Activated CD4-positive, alpha-beta T cell treated with anti-CD3 and anti-CD28 coated beads, Interleukin-2, amount 10 ng/mL, durations not matched to agents 24 days and 14 days (primary cell): ENCODE measurements at regions of chr7 and their contacts with region 1.

Region 1: GRCh38 chr7:30062591-30062990 is 34.4 kb downstream of the PLEKHA8 start:
- DNase-seq: no peak
- H3K4me3 Mint-ChIP-seq: no peak overlapping the region
- H3K27ac Mint-ChIP-seq: no peak overlapping the region
- H3K4me1 Mint-ChIP-seq: no peaks in the 10 kb centered on the region
- H3K27me3 Mint-ChIP-seq: no peaks in the 10 kb centered on the region

Region 2: DNA sequence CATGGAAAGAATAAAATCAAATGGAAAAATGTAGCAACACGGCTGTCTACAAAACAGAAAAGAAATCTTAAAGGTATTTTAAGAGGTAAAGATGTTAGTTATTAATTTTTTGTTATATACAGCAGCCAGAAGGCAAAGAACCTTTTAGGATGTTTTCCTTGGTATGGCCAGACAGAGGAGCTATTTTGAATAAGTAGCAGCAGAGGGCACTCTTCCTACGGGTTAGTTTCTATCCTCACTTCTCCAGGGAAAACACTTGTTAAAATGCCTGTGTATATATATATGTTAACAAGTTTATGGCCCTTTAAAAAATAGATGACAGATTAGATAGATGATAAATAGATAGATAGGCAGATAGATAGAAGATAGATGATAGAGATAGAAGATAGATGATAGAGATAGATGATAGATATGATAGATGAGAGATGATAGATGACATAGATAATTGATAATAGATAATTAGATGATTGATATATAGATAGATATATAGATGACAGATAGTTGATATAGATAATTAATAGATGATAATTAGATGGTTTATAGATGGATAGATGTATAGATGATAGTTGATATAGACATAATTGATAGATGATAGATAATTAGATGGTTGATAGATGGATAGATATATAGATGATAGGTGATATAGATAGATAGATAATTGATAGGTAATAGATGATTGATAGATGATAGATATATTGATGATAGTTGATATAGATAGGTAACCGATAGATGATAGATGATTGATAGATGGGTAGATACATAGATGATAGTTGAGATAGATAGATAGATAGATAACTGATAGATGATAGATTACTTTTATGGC is 314.1 kb before region 1 on chr7:
- intact Hi-C with region 1: loop called (anchors 2 kb)
- DNase-seq: no peak
- H3K4me3 Mint-ChIP-seq: no peak overlapping the region
- H3K27ac Mint-ChIP-seq: no peak overlapping the region
- H3K4me1 Mint-ChIP-seq: no peaks in the 10 kb centered on the region
- H3K27me3 Mint-ChIP-seq: no peaks in the 10 kb centered on the region

Region 3: GRCh38 chr7:29884399-29885272 is 178.0 kb before region 1 on chr7:
- intact Hi-C with region 1: loop called (anchors 5 kb)
- DNase-seq: no peak
- H3K4me3 Mint-ChIP-seq: no peak overlapping the region
- H3K27ac Mint-ChIP-seq: no peak overlapping the region
- H3K4me1 Mint-ChIP-seq: no peaks in the 10 kb centered on the region
- H3K27me3 Mint-ChIP-seq: peaks cover 15% of the 10 kb centered on the region